ENCODE measurements at regions of chr1 and their contacts with region 1.

Region 1: GRCh38 chr1:58546520-58547308 is at the start of gene OMA1:
- DNase-seq: peak; percentile 96 to 99
- H3K4me3 ChIP-seq: peak within 1 kb of the TSS; percentile 77 to 95
- H3K27ac ChIP-seq: peak within 1 kb of the TSS; percentile 99 to 100
- H3K4me1 ChIP-seq: peaks cover 0 to 12% (median 3%) of the 10 kb centered on the region in 4 donors
- H3K27me3 ChIP-seq: no peaks in the 10 kb centered on the region
- CTCF ChIP-seq: peak; percentile 96 to 98

Region 2: DNA sequence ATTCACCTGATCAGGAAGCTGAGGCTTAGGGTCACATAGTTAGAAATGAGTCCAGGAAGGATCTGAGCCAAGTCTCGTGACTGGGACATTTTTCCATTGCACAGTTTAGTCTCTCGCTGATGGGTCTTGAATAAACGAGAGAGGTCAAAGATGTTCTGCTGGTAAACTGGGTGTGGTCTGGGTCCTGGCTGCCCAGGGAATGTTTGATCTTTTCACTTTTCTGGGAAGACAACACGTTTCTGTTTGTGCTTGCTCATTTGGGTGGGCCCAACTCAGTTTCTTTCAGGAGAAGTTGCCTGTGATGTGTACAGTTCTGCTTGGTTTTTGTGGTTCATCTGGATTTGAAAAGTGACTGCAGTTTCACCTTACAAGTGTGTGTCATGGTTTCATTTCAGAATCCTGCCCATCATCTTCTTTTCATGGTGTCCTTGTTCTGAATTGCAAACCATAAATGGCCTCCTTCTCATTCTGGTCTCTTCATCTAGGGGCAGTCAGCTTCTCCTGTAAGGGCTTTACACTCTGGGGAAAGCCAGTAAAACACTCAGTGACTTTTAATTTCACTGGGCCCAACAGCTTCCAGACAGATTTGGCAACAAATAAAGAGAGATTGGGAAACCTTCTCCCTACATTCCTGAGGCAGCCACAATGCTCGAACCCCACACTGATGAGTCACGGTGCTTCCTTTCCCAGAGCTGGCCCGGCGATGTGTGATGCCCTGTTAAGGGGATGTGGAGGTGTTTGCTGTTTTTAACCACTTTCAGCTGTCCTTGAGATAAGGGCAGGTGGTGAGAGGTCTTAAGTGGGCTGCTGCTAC is 37.6 kb after region 1 on chr1:
- intact Hi-C with region 1: loop called (anchors 5 kb)
- DNase-seq: peak; percentile 84 to 91
- H3K4me3 ChIP-seq: no peak overlapping the region
- H3K27ac ChIP-seq: peak overlapping the region; percentile 66 to 77
- H3K4me1 ChIP-seq: peaks cover 8 to 37% (median 33%) of the 10 kb centered on the region in 4 donors
- H3K27me3 ChIP-seq: no peaks in the 10 kb centered on the region
- CTCF ChIP-seq: no peak

Region 3: DNA sequence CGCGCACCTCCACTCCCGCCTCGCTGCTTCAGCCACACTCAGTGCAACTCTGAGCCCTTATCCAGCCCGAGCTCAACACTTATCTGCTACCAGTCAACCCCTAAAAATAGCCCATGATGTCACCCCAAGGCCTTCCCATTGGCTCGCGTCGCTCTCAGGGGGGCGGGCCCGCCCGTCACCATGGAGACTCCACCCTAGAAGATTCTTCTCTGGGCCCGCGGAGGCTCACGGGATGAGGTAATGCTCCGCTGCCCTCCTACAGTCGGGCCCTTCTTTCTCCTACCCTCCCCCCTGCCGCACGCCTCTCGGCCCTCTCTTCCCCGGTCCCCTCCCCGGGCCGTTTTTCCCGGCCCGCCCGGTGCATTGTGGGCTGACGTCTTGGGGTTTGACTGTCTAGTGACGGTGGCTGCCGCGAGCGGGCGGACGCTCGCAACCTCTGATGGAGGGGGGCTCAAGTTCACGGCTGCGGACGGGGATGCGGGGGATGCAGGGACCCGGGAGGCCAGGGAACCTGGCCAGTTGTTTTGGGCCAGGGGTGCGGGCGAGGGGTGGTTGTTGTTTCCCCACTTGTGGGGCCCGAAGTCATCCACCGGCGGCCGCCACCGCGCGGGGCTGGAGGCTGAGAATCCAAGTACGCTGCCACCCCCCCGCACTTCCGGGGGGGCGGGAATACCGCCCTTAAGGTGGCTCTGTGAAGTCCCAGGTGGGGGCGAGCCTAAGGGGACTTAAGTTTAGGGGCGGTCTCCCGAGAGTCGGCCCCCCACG is 237.5 kb after region 1 on chr1 and contains the start of gene JUN:
- intact Hi-C with region 1: no loop called
- DNase-seq: peak; percentile 100
- H3K4me3 ChIP-seq: peak within 1 kb of the TSS; percentile 83 to 88
- H3K27ac ChIP-seq: peak within 1 kb of the TSS; percentile 100
- H3K4me1 ChIP-seq: peaks cover 0 to 33% (median 19%) of the 10 kb centered on the region in 4 donors
- H3K27me3 ChIP-seq: no peaks in the 10 kb centered on the region
- CTCF ChIP-seq: no peak

Measured in tibial artery (tissue), 4 donors.